B cell (primary cell): ENCODE measurements at regions of chr2 and their contacts with region 1.

Region 1: DNA sequence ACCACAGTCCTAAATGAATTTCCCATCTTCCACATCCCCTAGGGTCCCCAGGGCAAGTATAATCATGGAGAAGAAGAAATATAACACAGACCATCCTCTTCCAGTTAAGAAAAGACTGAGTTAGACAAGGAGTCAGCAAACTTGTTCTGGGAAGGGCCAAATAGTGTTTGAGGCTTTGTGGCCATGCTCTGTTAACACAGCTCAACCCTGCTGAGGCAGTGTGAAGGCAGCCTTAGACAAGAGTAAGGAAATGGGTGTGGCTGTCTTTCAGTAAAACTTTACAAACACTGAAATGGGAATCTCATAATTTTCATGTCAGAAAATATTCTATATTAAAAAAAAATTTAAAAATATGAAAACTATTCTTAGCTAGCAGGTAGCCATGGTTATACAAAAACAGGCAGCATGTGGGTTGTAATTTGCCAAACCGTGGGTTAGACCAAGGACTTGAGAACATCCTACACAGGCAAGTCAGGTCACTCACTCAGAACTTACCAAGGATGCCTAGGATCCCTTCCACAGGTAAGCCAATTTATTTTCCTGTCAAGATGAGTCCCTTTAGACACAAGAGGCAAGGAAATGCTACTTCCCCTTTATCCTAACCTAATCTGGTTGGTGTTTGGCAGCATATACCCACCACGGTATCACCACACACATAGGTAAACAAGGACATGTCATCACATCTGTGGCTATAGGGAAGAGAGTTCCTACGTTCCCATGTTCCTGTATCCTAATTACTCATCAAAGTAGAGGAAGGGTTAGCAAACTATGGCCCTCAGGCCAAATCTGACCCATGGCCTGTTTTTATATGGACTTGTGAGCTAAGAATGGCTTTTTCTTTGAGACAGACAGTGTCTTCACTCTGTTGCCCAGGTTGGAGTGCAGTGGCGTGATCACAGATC is 31.9 kb downstream of the C2orf74 start:
- DNase-seq: peak; percentile 27
- ATAC-seq: no peak
- H3K4me3 ChIP-seq: no peak overlapping the region
- H3K4me3 Mint-ChIP-seq: no peak overlapping the region
- H3K27ac ChIP-seq: peak overlapping the region; percentile 31 to 74
- H3K27ac Mint-ChIP-seq: peak overlapping the region; percentile 39
- H3K4me1 ChIP-seq: peaks cover 5 to 12% of the 10 kb centered on the region in 2 donors
- H3K4me1 Mint-ChIP-seq: peaks cover 13% of the 10 kb centered on the region
- H3K27me3 ChIP-seq: no peaks in the 10 kb centered on the region
- H3K27me3 Mint-ChIP-seq: no peaks in the 10 kb centered on the region
- CTCF ChIP-seq: no peak

Region 2: GRCh38 chr2:61167587-61167986 is 26.3 kb before region 1 on chr2:
- CTCF ChIA-PET with region 1: no interaction called
- POLR2A ChIA-PET with region 1: no interaction called
- intact Hi-C with region 1: no loop called
- DNase-seq: no peak
- ATAC-seq: no peak
- H3K4me3 ChIP-seq: no peak overlapping the region
- H3K4me3 Mint-ChIP-seq: no peak overlapping the region
- H3K27ac ChIP-seq: no peak overlapping the region
- H3K27ac Mint-ChIP-seq: no peak overlapping the region
- H3K4me1 ChIP-seq: no peaks in the 10 kb centered on the region
- H3K4me1 Mint-ChIP-seq: no peaks in the 10 kb centered on the region
- H3K27me3 ChIP-seq: no peaks in the 10 kb centered on the region
- H3K27me3 Mint-ChIP-seq: no peaks in the 10 kb centered on the region
- CTCF ChIP-seq: no peak

Region 3: GRCh38 chr2:61204781-61205531 is 11.0 kb after region 1 on chr2:
- CTCF ChIA-PET with region 1: interaction called, 3 read pairs
- POLR2A ChIA-PET with region 1: interaction called, 11 read pairs
- intact Hi-C with region 1: no loop called
- DNase-seq: no peak
- ATAC-seq: no peak
- H3K4me3 ChIP-seq: no peak overlapping the region
- H3K4me3 Mint-ChIP-seq: no peak overlapping the region
- H3K27ac ChIP-seq: no peak overlapping the region
- H3K27ac Mint-ChIP-seq: no peak overlapping the region
- H3K4me1 ChIP-seq: no peaks in the 10 kb centered on the region
- H3K4me1 Mint-ChIP-seq: no peaks in the 10 kb centered on the region
- H3K27me3 ChIP-seq: no peaks in the 10 kb centered on the region
- H3K27me3 Mint-ChIP-seq: no peaks in the 10 kb centered on the region
- CTCF ChIP-seq: no peak